Heart left ventricle (tissue), 16 donors: ENCODE measurements at regions of chr6 and their contacts with region 1.

Region 1: DNA sequence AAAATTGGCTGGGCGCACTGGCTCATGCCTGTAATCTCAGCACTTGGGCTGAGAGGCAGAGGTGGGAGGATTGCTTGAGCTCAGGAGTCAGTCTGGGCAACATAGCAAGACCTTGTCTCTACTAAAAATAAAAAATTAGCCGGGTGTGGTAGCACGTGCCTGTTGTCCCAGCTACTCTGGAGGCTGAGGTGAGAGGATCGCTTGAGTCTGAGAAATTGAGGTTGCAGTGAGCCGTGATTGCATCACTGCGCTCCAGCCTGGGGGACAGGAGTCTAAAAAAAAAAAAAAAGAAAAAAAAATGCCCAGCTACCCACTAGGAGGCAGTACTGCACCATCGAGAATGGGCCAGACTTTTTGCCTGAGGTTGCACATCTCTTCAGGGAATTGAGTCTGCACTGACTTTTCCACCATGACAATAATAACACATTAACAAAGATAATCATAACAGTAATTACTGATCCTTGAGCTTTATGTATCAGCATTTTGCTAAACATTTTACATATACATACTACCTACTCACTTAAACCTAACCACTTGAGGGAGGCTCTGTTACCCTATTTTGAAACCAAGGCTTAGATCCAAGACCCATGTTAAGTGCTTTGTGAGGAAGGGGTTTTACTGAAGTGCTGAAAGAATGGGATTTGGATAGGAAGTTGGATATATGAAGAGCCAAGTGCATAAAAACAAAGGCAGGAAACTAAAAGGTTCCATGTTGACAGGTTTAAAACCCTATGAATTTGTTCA is 21.0 kb downstream of the SRSF3 start:
- DNase-seq: peak in 3 of 5 donors; percentile 35 to 58 (median 56)
- ATAC-seq: peak; percentile 67 to 80 (median 78)
- H3K4me3 ChIP-seq: no peak overlapping the region
- H3K27ac ChIP-seq: peak overlapping the region in 5 of 12 donors; percentile 14 to 49 (median 43)
- H3K4me1 ChIP-seq: peaks cover 0 to 36% (median 15%) of the 10 kb centered on the region in 12 donors
- H3K27me3 ChIP-seq: no peaks in the 10 kb centered on the region
- CTCF ChIP-seq: peak; percentile 51 to 75 (median 64)
- POLR2A ChIP-seq: no peak

Region 2: DNA sequence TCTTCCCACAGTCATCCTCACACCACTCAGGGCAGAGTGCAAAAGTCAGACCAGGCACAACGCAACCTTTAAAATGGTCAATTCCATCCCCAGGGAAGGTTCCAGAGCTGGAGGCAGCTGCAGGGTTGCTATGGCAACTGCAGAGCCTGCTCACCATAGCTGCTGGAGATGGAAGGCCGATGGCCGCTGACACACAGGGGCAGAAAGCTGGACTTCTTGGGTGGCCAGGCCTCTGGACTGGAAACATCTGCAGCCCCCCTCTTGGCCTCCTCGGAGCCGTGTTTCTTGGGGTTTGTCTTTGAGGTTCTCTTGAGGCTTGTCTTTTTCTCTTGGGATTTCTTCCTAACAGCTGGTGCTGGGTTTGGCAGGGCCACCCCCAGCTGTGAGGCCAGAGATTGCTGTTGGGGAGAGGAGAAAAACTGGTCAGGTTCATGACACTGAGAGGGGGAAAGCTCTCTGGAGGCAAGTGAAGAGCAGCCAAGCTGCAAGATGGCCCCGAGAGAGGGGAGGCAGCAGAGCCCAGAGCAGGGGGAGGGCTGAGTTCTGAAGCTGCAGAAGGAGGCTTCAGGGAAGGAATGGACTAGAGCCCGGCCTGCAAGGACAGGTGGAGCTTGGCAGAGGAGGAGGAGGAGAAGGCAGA is 288.7 kb before region 1 on chr6:
- intact Hi-C with region 1: no loop called
- DNase-seq: peak in 3 of 5 donors; percentile 40 to 47 (median 44)
- ATAC-seq: peak in 2 of 4 donors; percentile 39 to 55
- H3K4me3 ChIP-seq: no peak overlapping the region
- H3K27ac ChIP-seq: no peak overlapping the region
- H3K4me1 ChIP-seq: no peaks in the 10 kb centered on the region
- H3K27me3 ChIP-seq: peaks cover 0 to 23% (median 5%) of the 10 kb centered on the region in 9 donors
- CTCF ChIP-seq: no peak
- POLR2A ChIP-seq: no peak

Region 3: GRCh38 chr6:36478051-36478526 is 137.1 kb before region 1 on chr6:
- intact Hi-C with region 1: no loop called
- DNase-seq: no peak
- ATAC-seq: peak in 1 of 4 donors; percentile 9
- H3K4me3 ChIP-seq: no peak overlapping the region
- H3K27ac ChIP-seq: no peak overlapping the region
- H3K4me1 ChIP-seq: peaks cover 0 to 9% (median 0%) of the 10 kb centered on the region in 12 donors
- H3K27me3 ChIP-seq: no peaks in the 10 kb centered on the region
- CTCF ChIP-seq: no peak
- POLR2A ChIP-seq: no peak

Region 4: DNA sequence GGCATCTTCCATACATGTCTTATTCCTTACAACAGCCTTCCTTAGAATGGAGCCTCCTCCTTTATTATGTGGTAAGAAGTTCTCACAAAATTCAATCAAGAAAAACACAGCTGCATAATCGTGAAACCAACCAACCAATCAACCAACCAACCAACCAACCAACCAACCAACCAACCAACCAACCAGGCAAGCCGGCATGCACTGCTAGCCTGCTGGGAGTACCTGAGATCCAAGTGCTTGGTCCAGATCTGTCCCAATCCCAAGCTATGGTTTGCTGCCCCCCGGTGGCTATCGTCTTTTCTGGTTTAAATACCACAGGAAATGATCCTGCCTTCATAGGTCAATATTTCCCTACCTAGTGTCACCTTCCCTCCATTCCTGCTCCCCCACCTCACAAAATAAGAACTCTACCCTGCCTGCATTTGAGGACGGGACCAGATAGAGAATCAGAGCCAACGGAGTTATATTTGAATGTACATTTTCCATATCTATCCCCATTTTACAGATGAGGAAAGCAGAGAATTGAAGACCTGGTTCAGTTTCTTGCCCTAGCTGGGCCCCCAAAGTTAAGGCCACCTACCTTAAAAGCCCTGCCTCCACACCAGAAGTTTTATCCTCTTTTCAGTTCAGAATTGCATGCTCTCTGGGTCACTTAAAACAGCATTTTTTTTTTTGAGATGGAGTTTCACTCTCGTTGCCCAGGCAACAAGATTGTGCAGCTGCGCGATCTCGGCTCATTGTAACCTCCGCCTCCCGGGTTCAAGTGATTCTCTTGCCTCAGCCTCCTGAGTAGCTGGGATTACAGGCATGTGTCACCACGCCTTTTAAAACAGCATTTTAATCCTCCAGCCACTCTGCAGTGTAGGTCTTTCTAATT is 109.6 kb after region 1 on chr6:
- intact Hi-C with region 1: loop called in 2 of 10 experiments (anchors 2 to 10 kb)
- DNase-seq: peak in 3 of 5 donors; percentile 42 to 68 (median 63)
- ATAC-seq: peak in 3 of 4 donors; percentile 49 to 75 (median 55)
- H3K4me3 ChIP-seq: no peak overlapping the region
- H3K27ac ChIP-seq: no peak overlapping the region
- H3K4me1 ChIP-seq: peaks cover 0 to 25% (median 5%) of the 10 kb centered on the region in 12 donors
- H3K27me3 ChIP-seq: no peaks in the 10 kb centered on the region
- CTCF ChIP-seq: peak; percentile 36 to 60 (median 49)
- POLR2A ChIP-seq: no peak

Region 5: GRCh38 chr6:36759148-36759759 is 144.1 kb after region 1 on chr6:
- intact Hi-C with region 1: loop called in 6 of 10 experiments (anchors 2 to 5 kb)
- DNase-seq: peak; percentile 78 to 92 (median 82)
- ATAC-seq: peak; percentile 62 to 83 (median 80)
- H3K4me3 ChIP-seq: no peak overlapping the region
- H3K27ac ChIP-seq: no peak overlapping the region
- H3K4me1 ChIP-seq: peaks cover 0 to 45% (median 5%) of the 10 kb centered on the region in 12 donors
- H3K27me3 ChIP-seq: no peaks in the 10 kb centered on the region
- CTCF ChIP-seq: peak; percentile 94 to 99 (median 97)
- POLR2A ChIP-seq: no peak

Region 6: GRCh38 chr6:36839749-36840431 is 224.7 kb after region 1 on chr6:
- intact Hi-C with region 1: loop called in 1 of 10 experiments (anchors 10 kb)
- DNase-seq: peak; percentile 59 to 80 (median 75)
- ATAC-seq: peak in 3 of 4 donors; percentile 6 to 43 (median 24)
- H3K4me3 ChIP-seq: peak overlapping the region; percentile 33 to 76 (median 60)
- H3K27ac ChIP-seq: peak overlapping the region; percentile 65 to 91 (median 75)
- H3K4me1 ChIP-seq: peaks cover 4 to 61% (median 17%) of the 10 kb centered on the region in 12 donors
- H3K27me3 ChIP-seq: peaks cover 0 to 24% (median 0%) of the 10 kb centered on the region in 9 donors
- CTCF ChIP-seq: peak in 10 of 12 donors; percentile 9 to 56 (median 42)
- POLR2A ChIP-seq: no peak

Region 7: DNA sequence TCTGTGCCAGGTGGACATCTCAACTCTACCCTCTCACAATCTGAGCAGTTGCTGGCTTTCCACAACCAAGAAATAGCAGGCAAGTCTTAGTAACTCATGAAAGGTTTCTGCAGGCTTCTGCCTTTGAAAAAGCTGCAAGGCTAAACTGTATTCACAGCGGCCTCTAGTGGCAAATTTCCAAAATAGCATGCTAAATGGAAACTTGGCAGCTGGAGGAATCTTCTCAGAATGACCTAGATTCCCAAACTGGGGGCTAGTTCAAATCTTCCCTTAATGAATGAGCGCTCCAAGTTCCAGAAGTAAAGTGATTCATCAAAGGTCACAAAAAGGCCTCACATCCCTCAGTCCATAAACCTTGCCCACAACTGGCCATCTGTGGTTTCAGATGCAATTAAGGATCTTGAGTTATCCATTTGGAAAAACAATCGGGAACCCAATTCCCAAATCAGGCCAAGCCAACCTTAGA is 236.0 kb after region 1 on chr6:
- intact Hi-C with region 1: loop called in 6 of 10 experiments (anchors 10 kb)
- DNase-seq: peak in 3 of 5 donors; percentile 36 to 69 (median 68)
- ATAC-seq: peak in 2 of 4 donors; percentile 4 to 17
- H3K4me3 ChIP-seq: no peak overlapping the region
- H3K27ac ChIP-seq: peak overlapping the region in 8 of 12 donors; percentile 39 to 98 (median 79)
- H3K4me1 ChIP-seq: peaks cover 2 to 76% (median 50%) of the 10 kb centered on the region in 12 donors
- H3K27me3 ChIP-seq: no peaks in the 10 kb centered on the region
- CTCF ChIP-seq: peak; percentile 68 to 90 (median 83)
- POLR2A ChIP-seq: no peak